ENCODE measurements at regions of chr4 and their contacts with region 1.

Region 1: DNA sequence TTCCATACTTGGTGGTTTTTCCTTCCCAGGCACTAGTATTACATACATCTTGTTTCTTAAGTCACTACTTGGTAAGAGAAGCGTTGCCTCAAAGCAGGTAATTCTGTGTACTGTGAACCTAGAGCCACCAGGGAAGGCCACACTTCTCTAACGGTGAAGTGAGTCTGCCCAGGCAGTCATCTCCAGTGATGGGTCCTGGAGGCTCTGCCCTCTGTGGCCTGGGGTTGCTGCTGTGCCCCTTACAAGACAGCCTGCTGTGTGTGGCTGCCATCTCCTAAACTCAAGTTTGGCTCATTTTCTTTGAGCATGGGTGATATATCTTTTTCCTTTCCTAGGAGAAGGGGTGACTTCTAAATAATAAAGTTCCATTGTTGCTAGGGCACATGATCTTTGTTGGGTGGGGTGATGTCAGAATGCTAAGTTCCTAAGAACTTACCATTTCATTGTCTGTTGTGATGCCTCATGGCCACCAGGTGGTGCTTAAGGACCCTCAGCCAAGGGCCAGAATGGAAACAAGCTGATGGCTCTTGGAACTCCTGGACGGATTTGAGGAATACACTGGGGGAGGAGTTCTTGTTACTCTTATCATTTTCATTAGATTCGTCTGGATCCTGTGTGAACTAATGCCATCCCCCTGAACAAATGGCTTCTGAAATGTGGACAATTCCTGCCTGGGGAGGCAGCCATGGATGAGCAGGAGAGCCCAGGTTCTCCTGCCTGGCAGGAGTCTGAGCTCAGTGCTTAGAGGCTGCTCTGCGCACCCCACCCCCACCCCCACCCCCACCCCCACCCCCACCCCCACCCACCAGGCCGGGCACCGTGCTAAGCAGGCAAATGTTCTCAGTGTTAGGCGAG is 41.1 kb upstream of the WDR1 start:
- DNase-seq: peak; percentile 39 to 62
- H3K4me3 ChIP-seq: no peak overlapping the region
- H3K27ac ChIP-seq: no peak overlapping the region
- H3K4me1 ChIP-seq: peaks cover 0 to 5% (median 0%) of the 10 kb centered on the region in 4 experiments; a peak in 1 of 7 replicates
- H3K27me3 ChIP-seq: no peaks in the 10 kb centered on the region; a peak in 4 of 7 replicates
- CTCF ChIP-seq: peak; percentile 52 to 86 (median 73)
- EP300 ChIP-seq: no peak
- POLR2A ChIP-seq: no peak
- RAD21 ChIP-seq: peak; percentile 86 to 88

Region 2: GRCh38 chr4:10140866-10141759 is 16.6 kb before region 1 on chr4:
- CTCF ChIA-PET with region 1: interaction called, 37 read pairs
- POLR2A ChIA-PET with region 1: no interaction called
- DNase-seq: peak in 1 of 2 experiments; percentile 68
- H3K4me3 ChIP-seq: peak overlapping the region in 1 of 4 experiments; percentile 23; a peak in 1 of 8 replicates
- H3K27ac ChIP-seq: no peak overlapping the region
- H3K4me1 ChIP-seq: no peaks in the 10 kb centered on the region
- H3K27me3 ChIP-seq: peaks cover 0 to 8% (median 0%) of the 10 kb centered on the region in 4 experiments; a peak in 2 of 7 replicates
- CTCF ChIP-seq: peak; percentile 72 to 81 (median 79)
- EP300 ChIP-seq: no peak
- POLR2A ChIP-seq: no peak
- RAD21 ChIP-seq: peak; percentile 74

Region 3: GRCh38 chr4:10186228-10187214 is 28.8 kb after region 1 on chr4:
- CTCF ChIA-PET with region 1: interaction called, 21 read pairs
- POLR2A ChIA-PET with region 1: no interaction called
- DNase-seq: no peak
- H3K4me3 ChIP-seq: no peak overlapping the region
- H3K27ac ChIP-seq: no peak overlapping the region
- H3K4me1 ChIP-seq: no peaks in the 10 kb centered on the region
- H3K27me3 ChIP-seq: no peaks in the 10 kb centered on the region
- CTCF ChIP-seq: peak in 2 of 3 experiments; percentile 15 to 31; a peak in 2 of 4 replicates
- EP300 ChIP-seq: no peak
- POLR2A ChIP-seq: no peak
- RAD21 ChIP-seq: peak; percentile 24 to 42; a peak in 2 of 4 replicates

Region 4: GRCh38 chr4:10461091-10461849 is 303.6 kb after region 1 on chr4:
- CTCF ChIA-PET with region 1: interaction called, 24 read pairs
- POLR2A ChIA-PET with region 1: no interaction called
- DNase-seq: peak in 1 of 2 experiments; percentile 86
- H3K4me3 ChIP-seq: peak overlapping the region; percentile 38 to 79 (median 67)
- H3K27ac ChIP-seq: no peak overlapping the region
- H3K4me1 ChIP-seq: peaks cover 0 to 21% (median 11%) of the 10 kb centered on the region in 4 experiments; a peak in 5 of 7 replicates
- H3K27me3 ChIP-seq: peaks cover 57 to 72% (median 66%) of the 10 kb centered on the region in 4 experiments
- CTCF ChIP-seq: peak; percentile 86 to 93 (median 91)
- EP300 ChIP-seq: no peak
- POLR2A ChIP-seq: no peak
- RAD21 ChIP-seq: peak; percentile 70 to 83

Region 5: GRCh38 chr4:10554694-10555093 is 397.0 kb after region 1 on chr4:
- CTCF ChIA-PET with region 1: interaction called, 52 read pairs
- POLR2A ChIA-PET with region 1: no interaction called
- DNase-seq: peak in 1 of 2 experiments; percentile 77
- H3K4me3 ChIP-seq: no peak overlapping the region
- H3K27ac ChIP-seq: no peak overlapping the region
- H3K4me1 ChIP-seq: no peaks in the 10 kb centered on the region
- H3K27me3 ChIP-seq: no peaks in the 10 kb centered on the region
- CTCF ChIP-seq: peak in 2 of 3 experiments; percentile 59 to 75; a peak in 3 of 4 replicates
- EP300 ChIP-seq: no peak
- POLR2A ChIP-seq: no peak
- RAD21 ChIP-seq: peak; percentile 85 to 86

Measured in H1 (cell line).